Ovary (tissue), 10 donors: ENCODE measurements at regions of chr13 and their contacts with region 1.

Region 1: DNA sequence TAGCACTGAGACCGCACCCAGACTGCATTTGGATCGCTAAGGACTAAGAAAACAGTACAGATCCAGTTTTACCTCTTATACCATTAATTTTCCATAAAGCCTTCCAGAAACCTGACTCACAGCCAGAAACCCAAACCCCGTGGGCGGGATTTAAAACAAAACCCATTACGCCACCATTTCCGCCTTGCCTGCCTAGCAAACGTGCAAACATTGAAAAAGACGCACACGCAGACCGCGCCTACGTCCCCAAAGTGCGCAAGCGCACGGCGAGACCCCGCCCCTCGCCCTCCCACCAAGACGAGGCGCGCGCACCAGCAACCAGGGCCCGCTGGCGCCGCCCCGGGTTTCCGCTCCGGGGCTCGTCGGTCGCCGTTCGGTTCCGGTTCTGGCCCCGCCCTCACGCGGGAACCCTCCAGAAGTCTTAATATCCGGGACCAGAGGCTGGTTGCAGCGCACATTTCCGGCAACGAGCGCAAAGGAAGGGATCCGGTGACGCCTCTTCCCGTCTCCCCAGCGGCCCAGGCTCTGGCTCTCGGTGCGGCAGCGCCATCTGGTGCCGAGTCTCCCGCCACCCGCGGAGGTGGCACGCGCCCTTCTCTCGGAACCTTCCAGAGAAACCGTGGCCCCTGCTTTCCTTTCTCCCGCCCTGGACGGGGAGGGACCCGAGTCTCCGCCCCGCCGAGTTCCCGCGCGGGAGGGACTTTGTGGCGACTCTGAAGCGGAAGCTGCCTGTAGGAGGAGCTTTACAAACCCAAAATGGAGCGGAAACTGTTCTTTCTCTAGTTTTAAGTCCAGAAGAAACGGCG is 256.9 kb upstream of the STARD13 start:
- DNase-seq: peak; percentile 97 to 100 (median 98)
- H3K4me3 ChIP-seq: peak overlapping the region; percentile 38
- H3K27ac ChIP-seq: peak overlapping the region; percentile 92 to 96
- H3K4me1 ChIP-seq: peaks cover 4% of the 10 kb centered on the region
- H3K27me3 ChIP-seq: no peaks in the 10 kb centered on the region
- CTCF ChIP-seq: peak; percentile 92 to 97 (median 97)
- EP300 ChIP-seq: peak; percentile 96
- POLR2A ChIP-seq: peak; percentile 62

Region 2: DNA sequence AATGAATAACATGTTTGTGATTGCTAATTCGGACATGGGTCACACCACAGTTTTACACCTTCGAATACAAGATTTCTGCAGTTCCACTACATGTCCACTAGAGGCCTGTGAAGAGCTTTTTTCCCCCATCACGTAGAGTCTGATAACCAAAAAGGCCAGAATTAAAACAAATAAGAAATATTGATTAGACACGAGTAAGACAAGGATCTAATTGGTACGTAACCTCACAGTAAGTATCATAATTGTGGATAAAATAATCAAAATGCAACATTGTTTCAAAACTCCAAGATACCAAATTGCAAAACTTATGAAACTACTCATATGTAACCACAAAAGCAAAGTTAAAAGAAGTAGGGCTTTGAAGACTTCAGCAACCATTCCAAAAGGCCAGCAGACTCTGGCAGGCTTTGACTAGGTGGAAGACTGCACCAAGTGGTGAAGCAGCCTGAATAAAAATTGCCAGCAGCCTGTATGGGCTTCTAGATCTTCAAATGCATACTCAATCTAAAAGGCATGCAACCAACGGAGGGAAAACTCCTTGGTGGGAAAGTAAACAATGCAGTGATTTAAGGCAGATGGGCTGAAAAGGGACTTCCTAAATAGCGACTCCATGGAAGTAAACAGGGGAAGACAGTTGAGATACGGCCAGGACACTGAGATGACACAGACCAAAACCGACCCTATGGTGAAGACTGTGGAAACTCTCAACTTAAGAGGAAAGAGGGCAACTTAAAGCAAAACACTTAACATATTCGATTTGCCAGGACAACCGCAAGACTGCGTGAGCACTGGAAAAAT is 313.6 kb before region 1 on chr13:
- intact Hi-C with region 1: loop called in 1 of 4 experiments (anchors 5 kb)
- DNase-seq: peak in 1 of 5 donors; percentile 20
- H3K4me3 ChIP-seq: no peak overlapping the region
- H3K27ac ChIP-seq: peak overlapping the region in 1 of 2 donors; percentile 43
- H3K4me1 ChIP-seq: peaks cover 7% of the 10 kb centered on the region
- H3K27me3 ChIP-seq: no peaks in the 10 kb centered on the region
- CTCF ChIP-seq: peak; percentile 83 to 94 (median 86)
- EP300 ChIP-seq: no peak
- POLR2A ChIP-seq: no peak

Region 3: DNA sequence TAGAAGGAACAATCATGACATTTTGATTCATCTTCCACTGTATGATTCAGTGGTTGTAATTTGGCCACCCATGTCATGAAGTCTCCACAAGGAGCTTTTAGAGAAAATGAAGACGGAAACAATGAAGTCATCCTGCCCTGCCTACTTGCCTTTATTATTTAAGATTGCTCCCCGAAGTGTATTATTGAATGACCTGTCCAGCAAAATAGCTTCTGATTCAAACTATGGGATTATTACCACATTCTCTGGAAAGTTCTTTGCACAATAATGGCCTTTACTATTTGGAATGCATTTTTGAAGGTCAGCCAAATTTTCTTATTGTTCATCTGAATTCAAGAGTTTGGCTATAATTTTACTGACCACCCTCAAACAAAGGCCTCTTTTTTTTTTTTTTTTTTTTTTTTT is 197.7 kb after region 1 on chr13:
- intact Hi-C with region 1: no loop called
- DNase-seq: no peak
- H3K4me3 ChIP-seq: no peak overlapping the region
- H3K27ac ChIP-seq: no peak overlapping the region
- H3K4me1 ChIP-seq: no peaks in the 10 kb centered on the region
- H3K27me3 ChIP-seq: no peaks in the 10 kb centered on the region
- CTCF ChIP-seq: no peak
- EP300 ChIP-seq: no peak
- POLR2A ChIP-seq: no peak